OCI-LY7 (cell line): ENCODE measurements at regions of chr7 and their contacts with region 1.

Region 1: DNA sequence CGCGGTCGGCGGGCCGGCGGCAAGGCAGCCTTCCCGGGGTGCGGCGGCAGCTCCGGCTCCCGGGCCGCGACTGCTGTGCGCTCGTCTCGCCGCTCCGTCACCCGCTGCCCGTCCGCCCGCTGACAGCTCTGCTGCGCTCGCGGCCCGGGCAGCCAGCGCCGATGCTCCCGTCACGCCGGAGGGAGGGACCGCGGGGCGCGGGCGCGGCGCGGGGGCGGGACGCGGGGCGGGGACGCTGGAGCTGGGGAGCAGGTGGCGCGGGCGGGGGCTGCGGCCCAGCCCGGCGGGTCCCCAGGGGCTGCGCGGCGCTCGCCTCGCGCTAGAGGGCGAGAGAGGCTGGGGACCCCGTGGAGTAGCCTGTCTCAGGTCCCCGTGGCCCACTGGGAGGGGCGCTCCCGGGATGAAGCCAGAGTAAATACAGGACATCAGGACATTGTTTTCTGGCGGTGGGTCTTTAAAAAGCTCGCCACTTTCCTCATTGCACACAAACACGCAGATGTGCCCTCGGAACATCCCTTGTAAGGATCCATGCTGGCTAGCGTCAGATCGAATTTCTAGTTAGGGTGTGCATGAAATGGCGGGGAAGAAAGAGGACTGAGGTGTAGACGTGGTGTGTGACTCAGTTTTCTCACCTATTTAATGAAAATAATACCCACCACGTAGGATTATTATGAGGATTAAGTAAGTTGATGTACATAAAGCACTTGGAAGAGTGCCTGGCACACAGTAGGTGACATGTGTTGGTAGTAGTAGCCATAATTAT is at the start of gene ELAPOR2:
- DNase-seq: peak; percentile 87
- H3K4me3 ChIP-seq: peak within 1 kb of the TSS; percentile 85
- H3K27ac ChIP-seq: peak within 1 kb of the TSS; percentile 5
- H3K4me1 ChIP-seq: peaks cover 17% of the 10 kb centered on the region
- CTCF ChIP-seq: peak; percentile 70
- total RNA-seq, gene ELAPOR2: 4.1 and 4.6 TPM in 2 replicates

Region 2: GRCh38 chr7:86926732-86927131 is 133.0 kb before region 1 on chr7:
- CTCF ChIA-PET with region 1: no interaction called
- POLR2A ChIA-PET with region 1: no interaction called
- intact Hi-C with region 1: loop called (anchors 1 kb)
- DNase-seq: peak; percentile 68
- H3K4me3 ChIP-seq: no peak overlapping the region
- H3K27ac ChIP-seq: no peak overlapping the region
- H3K4me1 ChIP-seq: peaks cover 9% of the 10 kb centered on the region
- CTCF ChIP-seq: peak; percentile 89

Region 3: GRCh38 chr7:87144173-87144657 is 84.5 kb after region 1 on chr7:
- CTCF ChIA-PET with region 1: no interaction called
- POLR2A ChIA-PET with region 1: interaction called, 13 read pairs
- intact Hi-C with region 1: loop called (anchors 2 kb)
- DNase-seq: peak; percentile 84
- H3K4me3 ChIP-seq: peak overlapping the region; percentile 26
- H3K27ac ChIP-seq: peak overlapping the region; percentile 65
- H3K4me1 ChIP-seq: peaks cover 24% of the 10 kb centered on the region
- CTCF ChIP-seq: no peak

Region 4: GRCh38 chr7:87231256-87231655 is 171.6 kb after region 1 on chr7:
- CTCF ChIA-PET with region 1: no interaction called
- POLR2A ChIA-PET with region 1: interaction called, 3 read pairs
- intact Hi-C with region 1: loop called (anchors 2 kb)
- DNase-seq: no peak
- H3K4me3 ChIP-seq: no peak overlapping the region
- H3K27ac ChIP-seq: no peak overlapping the region
- H3K4me1 ChIP-seq: peaks cover 10% of the 10 kb centered on the region
- CTCF ChIP-seq: no peak

Region 5: DNA sequence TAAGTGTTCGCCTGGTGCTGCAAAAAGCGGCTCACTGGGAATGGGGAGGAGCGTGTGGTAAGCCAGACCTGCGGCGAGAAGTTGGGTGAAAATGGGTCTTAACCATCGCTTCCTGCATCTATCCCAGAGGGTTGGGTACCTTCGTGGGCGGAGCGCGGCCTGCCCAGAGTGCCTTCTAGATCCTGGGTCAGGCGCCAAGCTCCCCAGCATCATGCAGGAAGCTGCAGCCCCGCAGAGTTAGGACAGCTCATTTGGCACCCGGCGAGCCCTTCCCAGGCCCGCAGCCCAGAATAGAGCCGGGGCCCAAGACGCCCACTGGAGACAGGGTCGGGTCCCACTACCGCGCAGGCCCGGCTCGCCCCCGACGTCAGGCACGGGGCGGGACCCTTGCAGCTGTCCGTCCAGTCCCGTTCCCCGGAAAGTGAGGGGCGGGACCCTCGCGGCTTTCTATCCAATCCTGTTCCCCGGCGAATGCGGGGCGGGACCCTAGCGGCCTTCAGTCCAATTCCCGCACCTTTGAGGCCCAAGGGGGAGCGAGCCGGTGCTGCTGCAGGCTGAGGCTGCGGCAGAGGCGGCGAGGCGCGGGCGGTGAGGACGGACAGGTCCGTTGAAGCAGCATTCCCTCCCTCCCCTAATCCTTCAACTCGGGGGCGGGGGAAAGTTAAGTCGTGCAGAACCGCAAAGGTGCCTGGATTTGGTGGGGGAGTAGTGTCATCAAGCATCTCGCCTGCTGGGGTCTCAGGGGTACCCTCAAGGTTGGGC is 285.6 kb after region 1 on chr7 and contains the start of gene CROT:
- CTCF ChIA-PET with region 1: no interaction called
- POLR2A ChIA-PET with region 1: no interaction called
- intact Hi-C with region 1: loop called (anchors 5 kb)
- DNase-seq: peak; percentile 95
- H3K4me3 ChIP-seq: peak within 1 kb of the TSS; percentile 74
- H3K27ac ChIP-seq: peak within 1 kb of the TSS; percentile 57
- H3K4me1 ChIP-seq: peaks cover 30% of the 10 kb centered on the region
- CTCF ChIP-seq: no peak
- total RNA-seq, gene CROT: 3.0 and 5.2 TPM in 2 replicates